H1 (cell line): ENCODE measurements at regions of chr5 and their contacts with region 1.

Region 1: DNA sequence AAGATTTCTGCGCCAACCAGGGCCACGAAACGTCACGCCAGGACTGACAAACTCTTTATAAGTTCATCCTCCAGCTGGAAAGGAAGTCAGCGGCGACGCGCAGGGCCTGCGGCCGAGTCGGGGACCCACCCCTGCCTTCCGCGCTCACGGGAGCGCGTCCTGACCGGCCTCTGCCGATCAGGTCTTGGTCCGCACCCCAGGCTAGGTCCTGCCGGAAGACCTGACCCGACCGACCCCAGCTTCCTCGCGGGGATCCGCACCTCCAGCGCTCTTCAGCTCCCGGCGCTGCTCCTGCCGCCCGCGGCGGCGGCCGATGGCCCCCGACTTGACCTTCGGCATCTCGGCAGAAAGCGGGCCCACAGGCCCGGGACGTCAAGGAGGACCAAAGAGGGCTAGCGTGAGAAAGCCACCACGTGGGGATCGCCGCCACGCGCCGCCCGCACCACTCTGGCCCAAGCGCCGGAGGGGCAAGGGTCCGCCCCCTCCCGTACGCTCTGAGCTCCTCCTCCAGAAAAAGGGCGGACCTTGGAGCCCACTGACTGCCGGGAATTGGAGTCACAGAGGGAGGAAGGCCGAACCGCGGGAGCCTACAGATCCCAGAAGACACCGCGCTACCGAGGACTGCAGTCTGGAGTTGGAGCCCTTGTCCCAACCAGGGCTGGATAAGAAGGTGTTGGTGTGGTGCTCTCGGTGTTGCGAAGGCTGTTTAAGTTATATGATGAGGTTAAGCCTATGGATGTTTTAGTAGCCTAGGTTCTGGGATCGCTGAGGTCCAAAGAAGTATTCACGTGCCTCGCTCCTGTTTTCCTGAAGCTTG is at the start of gene DIMT1:
- DNase-seq: peak; percentile 91 to 93
- H3K4me3 ChIP-seq: peak within 1 kb of the TSS; percentile 79 to 93 (median 88)
- H3K27ac ChIP-seq: peak within 1 kb of the TSS; percentile 90
- H3K4me1 ChIP-seq: no peaks in the 10 kb centered on the region
- H3K27me3 ChIP-seq: no peaks in the 10 kb centered on the region
- CTCF ChIP-seq: no peak
- EP300 ChIP-seq: no peak
- POLR2A ChIP-seq: peak; percentile 93 to 96
- RAD21 ChIP-seq: no peak
- total RNA-seq, gene DIMT1: 39.2 and 42.1 TPM in 2 replicates

Region 2: GRCh38 chr5:62284946-62285891 is 118.4 kb before region 1 on chr5:
- CTCF ChIA-PET with region 1: no interaction called
- POLR2A ChIA-PET with region 1: no interaction called
- DNase-seq: no peak
- H3K4me3 ChIP-seq: no peak overlapping the region
- H3K27ac ChIP-seq: no peak overlapping the region
- H3K4me1 ChIP-seq: no peaks in the 10 kb centered on the region
- H3K27me3 ChIP-seq: no peaks in the 10 kb centered on the region
- CTCF ChIP-seq: no peak
- EP300 ChIP-seq: no peak
- POLR2A ChIP-seq: no peak
- RAD21 ChIP-seq: no peak

Region 3: GRCh38 chr5:62418462-62419076 is 14.9 kb after region 1 on chr5:
- CTCF ChIA-PET with region 1: no interaction called
- POLR2A ChIA-PET with region 1: interaction called, 78 read pairs
- DNase-seq: no peak
- H3K4me3 ChIP-seq: no peak overlapping the region
- H3K27ac ChIP-seq: no peak overlapping the region
- H3K4me1 ChIP-seq: peaks cover 0 to 2% (median 0%) of the 10 kb centered on the region in 4 experiments; a peak in 1 of 7 replicates
- H3K27me3 ChIP-seq: no peaks in the 10 kb centered on the region
- CTCF ChIP-seq: no peak
- EP300 ChIP-seq: no peak
- POLR2A ChIP-seq: no peak
- RAD21 ChIP-seq: no peak

Region 4: GRCh38 chr5:62431735-62432620 is 28.3 kb after region 1 on chr5:
- CTCF ChIA-PET with region 1: no interaction called
- POLR2A ChIA-PET with region 1: interaction called, 11 read pairs
- DNase-seq: no peak
- H3K4me3 ChIP-seq: no peak overlapping the region
- H3K27ac ChIP-seq: no peak overlapping the region
- H3K4me1 ChIP-seq: no peaks in the 10 kb centered on the region
- H3K27me3 ChIP-seq: no peaks in the 10 kb centered on the region
- CTCF ChIP-seq: no peak
- EP300 ChIP-seq: no peak
- POLR2A ChIP-seq: no peak
- RAD21 ChIP-seq: no peak